GM13977 (cell line): ENCODE measurements at regions of chr19 and their contacts with region 1.

Region 1: DNA sequence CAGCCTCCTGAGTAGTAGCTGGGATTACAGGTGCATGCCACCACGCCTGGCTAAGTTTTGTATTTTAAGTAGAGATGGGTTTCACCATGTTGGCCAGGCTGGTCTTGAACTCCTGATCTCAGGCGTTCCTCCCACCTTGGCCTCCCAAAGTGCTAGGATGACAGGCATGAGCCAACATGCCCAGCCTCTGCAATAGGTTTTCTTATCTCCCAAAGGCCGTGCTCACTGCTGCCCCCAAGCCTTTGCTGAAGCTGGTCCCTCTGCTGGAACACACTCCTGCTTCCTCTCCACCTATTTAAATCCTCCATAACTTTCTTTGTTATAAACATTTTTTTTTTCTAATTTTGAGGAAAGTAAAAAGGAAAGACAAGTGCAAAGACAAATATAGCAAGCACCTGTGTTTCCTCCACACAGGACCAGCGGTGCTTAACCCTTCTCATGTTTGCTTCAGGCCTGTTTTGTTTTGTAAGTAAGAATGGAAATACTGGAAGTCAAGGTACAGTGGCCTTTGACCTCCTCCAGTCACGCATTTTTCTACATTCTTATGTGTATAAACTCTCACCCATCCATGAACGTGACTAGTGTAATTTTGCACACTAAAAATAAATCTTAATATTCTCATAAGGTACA is 14.5 kb upstream of the TNFAIP8L1 start:
- DNase-seq: no peak
- CTCF ChIP-seq: peak; percentile 32

Region 2: GRCh38 chr19:4576016-4576933 is 48.6 kb before region 1 on chr19:
- in situ Hi-C with region 1: loop called (anchors 10 kb)
- DNase-seq: peak; percentile 85
- CTCF ChIP-seq: peak; percentile 72